CD8-positive, alpha-beta T cell (primary cell): ENCODE measurements at regions of chr11 and their contacts with region 1.

Region 1: DNA sequence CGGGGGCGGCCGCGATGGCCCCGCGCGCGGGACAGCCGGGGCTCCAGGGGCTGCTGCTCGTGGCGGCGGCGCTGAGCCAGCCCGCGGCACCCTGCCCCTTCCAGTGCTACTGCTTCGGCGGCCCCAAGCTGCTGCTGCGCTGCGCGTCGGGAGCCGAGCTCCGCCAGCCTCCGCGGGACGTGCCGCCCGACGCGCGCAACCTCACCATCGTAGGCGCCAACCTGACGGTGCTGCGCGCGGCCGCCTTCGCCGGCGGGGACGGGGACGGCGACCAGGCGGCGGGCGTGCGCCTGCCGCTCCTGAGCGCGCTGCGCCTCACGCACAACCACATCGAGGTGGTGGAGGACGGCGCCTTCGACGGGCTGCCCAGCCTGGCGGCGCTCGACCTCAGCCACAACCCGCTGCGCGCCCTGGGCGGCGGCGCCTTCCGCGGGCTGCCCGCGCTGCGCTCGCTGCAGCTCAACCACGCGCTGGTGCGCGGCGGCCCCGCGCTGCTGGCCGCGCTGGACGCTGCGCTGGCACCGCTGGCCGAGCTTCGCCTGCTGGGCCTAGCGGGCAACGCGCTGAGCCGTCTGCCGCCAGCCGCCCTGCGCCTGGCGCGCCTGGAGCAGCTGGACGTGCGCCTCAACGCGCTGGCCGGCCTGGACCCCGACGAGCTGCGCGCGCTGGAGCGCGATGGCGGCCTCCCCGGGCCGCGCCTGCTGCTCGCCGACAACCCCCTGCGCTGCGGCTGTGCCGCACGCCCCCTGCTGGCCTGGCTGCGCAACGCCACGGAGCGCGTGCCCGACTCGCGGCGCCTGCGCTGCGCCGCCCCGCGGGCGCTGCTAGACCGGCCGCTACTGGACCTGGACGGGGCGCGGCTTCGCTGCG is 697 bp downstream of the TPBGL start:
- DNase-seq: peak; percentile 77 to 91 (median 83)
- ATAC-seq: peak; percentile 93
- H3K4me3 ChIP-seq: peak overlapping the region; percentile 31 to 61
- H3K4me3 Mint-ChIP-seq: peak overlapping the region; percentile 79
- H3K27ac ChIP-seq: no peak overlapping the region
- H3K27ac Mint-ChIP-seq: no peak overlapping the region
- H3K4me1 ChIP-seq: peaks cover 9% of the 10 kb centered on the region
- H3K4me1 Mint-ChIP-seq: peaks cover 10% of the 10 kb centered on the region
- H3K27me3 ChIP-seq: peaks cover 17 to 20% of the 10 kb centered on the region in 2 experiments
- H3K27me3 Mint-ChIP-seq: peaks cover 49% of the 10 kb centered on the region
- CTCF ChIP-seq: peak; percentile 77

Region 2: DNA sequence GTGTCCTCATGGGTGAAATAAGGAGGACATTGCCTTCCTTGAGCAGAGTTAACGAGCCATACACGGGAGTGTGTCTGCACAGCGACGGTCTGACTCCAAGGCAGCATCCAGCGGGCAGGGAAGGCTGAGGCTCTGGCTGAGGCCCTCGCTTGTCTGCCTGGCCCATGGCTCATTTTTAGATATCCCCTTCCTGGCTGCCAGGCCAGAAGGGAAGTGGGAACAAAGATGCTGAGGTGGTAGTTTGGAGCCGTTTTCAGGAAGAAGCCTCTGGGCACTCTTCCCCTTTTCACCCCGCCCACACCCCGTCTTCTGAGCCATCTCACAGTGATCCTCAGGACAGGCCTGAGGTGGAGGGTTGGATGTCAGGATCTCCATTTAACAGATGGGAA is 93.4 kb before region 1 on chr11:
- CTCF ChIA-PET with region 1: interaction called, 625 read pairs
- POLR2A ChIA-PET with region 1: interaction called, 14 read pairs
- intact Hi-C with region 1: loop called in 1 of 2 experiments (anchors 1 kb)
- DNase-seq: no peak
- ATAC-seq: no peak
- H3K4me3 ChIP-seq: no peak overlapping the region
- H3K4me3 Mint-ChIP-seq: no peak overlapping the region
- H3K27ac ChIP-seq: no peak overlapping the region
- H3K27ac Mint-ChIP-seq: no peak overlapping the region
- H3K4me1 ChIP-seq: peaks cover 13% of the 10 kb centered on the region
- H3K4me1 Mint-ChIP-seq: peaks cover 15% of the 10 kb centered on the region
- H3K27me3 ChIP-seq: no peaks in the 10 kb centered on the region
- H3K27me3 Mint-ChIP-seq: peaks cover 7% of the 10 kb centered on the region
- CTCF ChIP-seq: no peak